ENCODE measurements at regions of chrX and their contacts with region 1.

Region 1: GRCh38 chrX:108537005-108537404 is 97.4 kb downstream of the COL4A5 start:
- DNase-seq: no peak
- ATAC-seq: no peak

Region 2: DNA sequence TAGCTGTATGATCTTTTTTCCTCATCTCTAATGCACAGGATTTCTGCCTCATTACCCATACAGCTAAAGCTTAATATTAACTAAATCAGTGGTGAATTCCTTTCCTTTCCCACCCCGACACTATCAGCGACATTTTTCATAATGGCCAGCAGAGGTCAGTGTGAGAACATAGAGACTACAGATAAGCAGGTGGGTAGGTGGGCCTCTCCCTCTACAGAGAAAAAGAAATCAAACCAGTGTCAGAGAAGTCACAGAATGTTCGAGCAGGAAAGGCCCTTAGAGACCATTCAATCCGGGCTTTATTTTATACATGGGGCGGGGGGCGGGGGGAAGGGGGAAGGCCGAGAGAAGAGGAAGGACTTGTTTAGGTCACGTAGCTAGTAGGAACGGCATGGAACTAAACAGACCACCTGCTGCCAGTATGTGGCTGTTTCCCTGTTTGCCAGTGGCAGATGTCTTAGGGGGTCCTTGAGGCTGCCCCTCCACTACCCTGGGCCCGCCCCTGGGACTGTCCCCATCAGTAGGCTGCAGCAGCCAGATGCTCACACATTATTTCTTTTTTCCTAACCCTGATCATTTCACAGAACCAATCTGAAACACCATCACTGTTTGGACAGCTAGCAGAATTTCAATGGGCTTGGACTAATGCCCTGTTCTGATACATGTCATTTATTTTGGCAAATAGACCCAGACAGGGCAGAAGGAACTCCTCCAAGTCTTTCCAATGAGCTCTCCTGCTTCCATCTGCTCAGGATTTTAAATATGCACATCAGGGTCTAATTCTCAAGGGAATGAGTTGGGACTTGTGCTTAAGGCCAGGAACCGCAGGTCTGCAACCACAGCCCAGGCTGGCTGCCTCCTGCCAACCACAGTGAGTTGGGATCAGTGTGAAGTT is 312.0 kb before region 1 on chrX:
- intact Hi-C with region 1: loop called (anchors 2 kb)
- DNase-seq: no peak
- ATAC-seq: no peak

Region 3: GRCh38 chrX:108304210-108304609 is 232.8 kb before region 1 on chrX:
- intact Hi-C with region 1: loop called (anchors 5 kb)
- DNase-seq: no peak
- ATAC-seq: no peak

Region 4: DNA sequence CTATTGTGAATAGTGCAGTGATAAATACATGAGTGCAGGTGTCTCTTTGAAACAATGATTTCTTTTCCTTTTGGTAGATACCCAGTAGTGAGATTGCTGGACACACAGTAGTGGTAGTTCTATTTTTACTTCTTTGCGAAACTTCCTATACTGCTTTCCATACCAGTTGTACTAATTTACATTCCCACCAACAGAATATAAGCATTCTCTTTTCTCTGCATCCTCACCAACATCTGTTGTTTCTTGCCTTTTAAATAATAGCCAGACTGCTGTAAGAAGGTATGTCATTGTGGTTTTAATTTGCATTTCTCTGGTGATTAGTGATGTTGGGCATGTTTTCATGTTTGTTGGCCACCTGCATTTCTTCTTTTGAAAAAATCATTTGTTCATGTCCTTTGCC is 204.7 kb before region 1 on chrX:
- intact Hi-C with region 1: no loop called
- DNase-seq: no peak
- ATAC-seq: no peak

Region 5: DNA sequence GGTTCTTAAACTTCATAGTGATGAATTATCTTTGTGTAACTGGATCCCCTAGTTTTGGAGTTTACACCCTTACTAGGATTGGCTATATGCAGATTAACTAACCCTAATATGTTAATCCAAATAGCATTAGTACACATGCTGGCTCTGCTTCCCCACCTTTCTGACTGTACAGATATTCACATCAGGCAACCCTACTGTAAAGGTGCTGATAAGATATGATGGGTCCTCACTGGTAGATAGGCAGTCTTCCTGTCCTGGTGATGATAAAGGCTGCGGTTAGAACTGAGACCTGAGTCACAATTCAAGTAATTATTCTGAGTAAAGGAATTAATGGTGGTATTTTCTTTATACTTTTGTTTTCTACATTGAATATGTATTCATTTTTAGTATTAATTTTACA is 21.2 kb after region 1 on chrX:
- intact Hi-C with region 1: no loop called
- DNase-seq: no peak
- ATAC-seq: no peak

Region 6: GRCh38 chrX:108641589-108642272 is 104.7 kb after region 1 on chrX:
- intact Hi-C with region 1: no loop called
- DNase-seq: no peak
- ATAC-seq: no peak